ENCODE measurements at regions of chr15 and their contacts with region 1.

Region 1: GRCh38 chr15:41774062-41774881 is at the start of gene MAPKBP1:
- H3K4me3 Mint-ChIP-seq: peak within 1 kb of the TSS; percentile 98
- H3K27ac Mint-ChIP-seq: peak within 1 kb of the TSS; percentile 86
- H3K4me1 Mint-ChIP-seq: peaks cover 53% of the 10 kb centered on the region
- H3K27me3 Mint-ChIP-seq: no peaks in the 10 kb centered on the region

Region 2: DNA sequence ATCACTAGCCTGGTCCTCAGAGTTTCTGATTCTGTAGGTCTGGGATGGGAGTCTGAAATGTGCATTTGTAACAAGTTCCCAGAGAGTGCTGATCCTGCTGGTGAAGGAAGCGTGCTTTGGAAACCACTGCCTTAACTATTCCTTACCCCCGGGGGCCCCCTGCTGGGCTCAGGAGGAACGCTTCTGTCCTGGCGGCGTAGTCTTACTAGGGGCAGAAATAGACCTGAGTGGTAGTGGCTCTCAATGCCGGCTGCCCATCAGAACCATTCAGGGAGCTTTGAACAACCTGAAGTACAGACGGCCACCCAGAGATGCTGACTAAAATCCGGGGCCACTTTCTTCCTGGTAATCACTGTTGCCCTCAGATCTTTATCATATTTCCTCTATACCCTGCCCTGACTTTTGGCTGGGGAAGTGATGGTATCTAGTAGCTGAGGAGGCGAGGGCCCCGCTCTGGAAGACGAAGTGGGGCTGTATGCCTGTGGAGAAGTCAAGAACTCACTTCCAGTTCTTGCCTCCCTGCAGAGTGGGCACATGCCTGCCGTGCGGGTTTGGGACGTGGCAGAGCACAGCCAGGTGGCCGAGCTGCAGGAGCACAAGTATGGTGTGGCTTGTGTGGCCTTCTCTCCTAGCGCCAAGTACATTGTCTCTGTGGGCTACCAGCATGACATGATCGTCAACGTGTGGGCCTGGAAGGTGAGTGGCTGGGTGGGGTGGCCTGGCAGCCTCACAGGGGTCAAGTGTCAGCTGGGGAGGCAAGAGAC is 37.3 kb after region 1 on chr15:
- intact Hi-C with region 1: loop called (anchors 1 kb)
- H3K4me3 Mint-ChIP-seq: no peak overlapping the region
- H3K27ac Mint-ChIP-seq: no peak overlapping the region
- H3K4me1 Mint-ChIP-seq: peaks cover 6% of the 10 kb centered on the region
- H3K27me3 Mint-ChIP-seq: no peaks in the 10 kb centered on the region

Region 3: DNA sequence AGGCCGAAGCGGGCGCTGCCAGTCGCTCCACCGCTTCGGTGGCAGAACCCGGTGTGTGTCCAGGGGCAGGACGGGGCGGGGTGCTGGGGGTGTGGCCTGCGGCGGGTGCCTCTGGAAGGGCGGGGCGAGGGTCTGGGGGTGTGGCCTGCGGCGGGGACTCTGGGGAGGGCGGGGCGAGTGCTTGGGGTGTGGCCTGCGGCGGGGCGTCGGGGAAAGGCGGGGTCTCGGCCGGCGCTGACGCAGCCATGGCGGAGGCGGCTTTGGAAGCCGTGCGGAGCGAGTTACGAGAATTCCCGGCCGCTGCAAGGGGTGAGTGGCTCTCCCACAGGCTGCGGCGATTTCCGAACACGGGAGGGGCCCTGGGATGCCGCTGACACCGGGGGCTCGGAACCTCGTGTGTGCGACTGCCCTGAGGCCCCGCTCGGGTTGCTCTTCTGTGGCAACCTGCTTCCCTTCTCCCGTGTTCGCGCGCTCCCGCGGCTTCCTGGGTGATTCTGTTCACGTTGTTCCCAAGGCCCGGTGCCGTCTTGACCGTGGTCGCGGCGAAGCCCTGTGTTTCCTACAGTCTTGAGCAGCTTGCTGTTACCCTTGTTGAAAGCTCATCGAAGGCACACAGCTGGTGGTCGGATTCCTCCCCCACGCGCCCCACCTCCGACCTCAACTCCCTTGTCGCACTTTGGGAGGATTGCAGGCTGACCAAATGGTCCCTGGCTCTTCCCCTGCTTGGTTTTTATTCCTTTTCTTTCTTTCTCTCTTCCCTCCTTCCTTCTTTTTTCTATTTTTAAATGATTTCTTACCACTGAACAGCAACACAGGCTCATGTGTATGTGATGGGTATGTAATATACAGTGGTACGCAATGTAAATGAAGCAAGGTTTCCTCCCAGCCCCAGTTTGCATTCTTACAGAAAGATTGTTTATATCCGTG is 53.9 kb after region 1 on chr15 and contains the start of gene JMJD7:
- intact Hi-C with region 1: loop called (anchors 1 kb)
- H3K4me3 Mint-ChIP-seq: peak within 1 kb of the TSS; percentile 82
- H3K27ac Mint-ChIP-seq: peak within 1 kb of the TSS; percentile 87
- H3K4me1 Mint-ChIP-seq: peaks cover 15% of the 10 kb centered on the region
- H3K27me3 Mint-ChIP-seq: peaks cover 14% of the 10 kb centered on the region

Region 4: DNA sequence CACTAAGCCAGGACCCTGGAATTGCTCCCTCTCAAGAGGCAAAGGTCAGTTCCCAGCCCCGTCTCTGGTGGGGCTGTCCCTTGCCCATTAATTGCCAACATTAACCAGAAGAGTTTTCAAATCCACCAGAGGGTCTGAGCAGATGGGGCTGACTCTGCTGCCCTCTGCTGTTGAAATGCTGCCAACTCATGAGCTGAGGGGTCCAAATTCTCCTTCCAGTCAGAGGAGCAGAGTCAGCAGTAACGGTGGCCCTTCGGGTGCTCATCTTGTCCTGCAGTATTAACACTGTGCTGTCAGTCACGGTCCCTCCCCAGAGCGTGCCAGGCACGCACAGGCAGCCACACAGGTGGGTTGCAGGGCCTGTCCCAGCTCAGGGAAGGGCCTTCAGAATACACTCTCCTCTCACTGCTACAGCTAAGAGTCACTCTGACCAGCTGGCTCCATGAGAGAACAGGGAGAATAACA is 130.3 kb after region 1 on chr15:
- intact Hi-C with region 1: loop called (anchors 10 kb)
- H3K4me3 Mint-ChIP-seq: no peak overlapping the region
- H3K27ac Mint-ChIP-seq: peak overlapping the region; percentile 89
- H3K4me1 Mint-ChIP-seq: peaks cover 51% of the 10 kb centered on the region
- H3K27me3 Mint-ChIP-seq: no peaks in the 10 kb centered on the region

Region 5: DNA sequence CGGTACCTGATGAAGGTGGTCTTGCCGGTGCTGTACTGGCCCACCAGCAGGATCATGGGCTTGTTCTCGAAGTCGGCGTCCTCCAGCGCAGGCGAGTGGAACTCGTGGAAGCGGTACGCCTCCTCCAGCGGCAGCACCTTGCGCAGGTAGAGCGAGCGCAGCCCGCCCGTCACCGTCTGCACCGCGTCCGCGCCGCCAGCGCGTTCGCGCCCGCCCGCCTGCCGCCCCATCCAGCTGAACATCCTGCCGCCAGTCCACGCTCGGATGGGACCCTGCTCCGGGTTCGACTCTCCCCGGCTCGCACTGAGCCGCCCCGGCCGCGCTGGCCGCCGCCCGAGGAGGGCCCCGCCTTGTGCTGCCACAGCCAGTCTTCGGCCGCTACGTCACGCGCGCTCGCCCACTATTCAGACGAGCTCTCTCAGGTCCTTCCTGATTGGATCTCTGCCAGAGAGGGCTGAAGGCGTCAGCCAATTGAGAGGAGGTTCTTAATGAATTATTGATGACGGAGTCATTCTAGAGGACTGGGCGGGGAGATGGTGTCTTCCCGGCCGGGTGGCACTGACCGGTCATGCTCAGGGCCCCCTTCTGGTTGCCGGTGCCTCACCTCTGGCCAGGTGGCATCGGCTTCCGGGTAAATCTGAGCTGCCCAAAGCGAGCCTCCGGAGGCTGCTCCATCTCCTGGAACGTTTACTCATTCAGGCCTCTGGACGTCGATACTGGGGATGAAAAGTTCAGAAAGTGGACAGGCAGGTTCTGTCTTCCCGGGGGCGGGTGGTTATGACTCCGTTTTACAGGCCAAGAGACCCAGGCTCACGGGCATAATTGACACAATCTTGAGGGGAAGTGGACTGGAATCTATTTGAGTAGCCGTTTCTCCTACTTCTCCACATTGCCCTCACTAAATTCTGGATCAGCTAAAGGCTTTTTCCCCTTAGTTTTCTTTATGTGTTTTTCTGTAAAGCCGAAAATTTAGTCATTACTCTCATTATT is 198.3 kb after region 1 on chr15 and contains the start of gene EHD4:
- intact Hi-C with region 1: loop called (anchors 5 kb)
- H3K4me3 Mint-ChIP-seq: peak within 1 kb of the TSS; percentile 91
- H3K27ac Mint-ChIP-seq: peak within 1 kb of the TSS; percentile 93
- H3K4me1 Mint-ChIP-seq: peaks cover 51% of the 10 kb centered on the region
- H3K27me3 Mint-ChIP-seq: no peaks in the 10 kb centered on the region